ENCODE measurements at regions of chr20 and their contacts with region 1.

Region 1: GRCh38 chr20:59087829-59088433 is 45.3 kb upstream of the PRELID3B start:
- DNase-seq: peak; percentile 76 to 94 (median 87)
- ATAC-seq: peak; percentile 91
- H3K4me3 ChIP-seq: no peak overlapping the region
- H3K4me3 Mint-ChIP-seq: no peak overlapping the region
- H3K27ac ChIP-seq: no peak overlapping the region
- H3K27ac Mint-ChIP-seq: peak overlapping the region; percentile 44
- H3K4me1 ChIP-seq: peaks cover 3% of the 10 kb centered on the region
- H3K4me1 Mint-ChIP-seq: peaks cover 7% of the 10 kb centered on the region
- H3K27me3 ChIP-seq: no peaks in the 10 kb centered on the region
- H3K27me3 Mint-ChIP-seq: no peaks in the 10 kb centered on the region
- CTCF ChIP-seq: peak; percentile 95

Region 2: DNA sequence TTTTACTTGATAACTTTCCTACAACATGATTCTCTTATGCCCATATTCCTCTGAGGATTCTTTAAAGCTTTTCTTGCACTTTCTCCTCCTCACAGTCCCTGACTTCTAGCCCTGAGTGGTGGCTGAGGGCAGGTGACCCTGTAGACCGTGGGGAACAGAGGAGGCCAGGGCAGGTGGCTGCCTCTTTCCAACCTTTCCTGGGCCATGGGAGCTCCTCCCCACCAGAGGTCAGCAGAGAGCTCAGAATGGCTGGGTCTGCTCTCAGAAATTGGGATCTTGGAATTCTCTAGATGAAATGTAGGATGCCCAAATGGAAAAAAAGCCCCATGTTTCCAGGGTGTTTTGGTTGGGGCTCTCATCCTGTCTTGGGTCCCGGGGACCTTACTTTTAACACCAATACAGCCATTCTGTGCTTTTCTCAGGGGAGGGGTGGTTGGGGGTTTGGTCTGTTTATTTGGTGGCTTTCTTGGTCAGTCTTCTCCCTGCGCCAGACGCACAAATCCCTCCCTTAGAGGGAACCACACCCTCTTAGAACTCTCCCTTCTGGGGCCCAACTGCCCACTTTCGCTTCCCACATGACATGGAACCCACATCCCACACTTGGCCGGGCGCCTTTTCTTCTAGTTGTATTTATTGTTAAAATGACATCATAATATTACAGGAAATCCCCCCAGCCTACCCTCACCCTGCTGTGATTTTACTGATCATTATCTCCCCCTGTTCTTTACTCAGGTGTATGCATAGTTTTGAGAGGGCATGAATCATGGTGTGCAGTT is 217.5 kb before region 1 on chr20:
- CTCF ChIA-PET with region 1: no interaction called
- POLR2A ChIA-PET with region 1: no interaction called
- intact Hi-C with region 1: loop called in 1 of 2 experiments (anchors 2 kb)
- DNase-seq: peak in 12 of 14 experiments; percentile 38 to 75 (median 50)
- ATAC-seq: peak; percentile 67
- H3K4me3 ChIP-seq: no peak overlapping the region
- H3K4me3 Mint-ChIP-seq: no peak overlapping the region
- H3K27ac ChIP-seq: no peak overlapping the region
- H3K27ac Mint-ChIP-seq: no peak overlapping the region
- H3K4me1 ChIP-seq: peaks cover 3% of the 10 kb centered on the region
- H3K4me1 Mint-ChIP-seq: peaks cover 5% of the 10 kb centered on the region
- H3K27me3 ChIP-seq: no peaks in the 10 kb centered on the region
- H3K27me3 Mint-ChIP-seq: no peaks in the 10 kb centered on the region
- CTCF ChIP-seq: peak; percentile 86

Region 3: DNA sequence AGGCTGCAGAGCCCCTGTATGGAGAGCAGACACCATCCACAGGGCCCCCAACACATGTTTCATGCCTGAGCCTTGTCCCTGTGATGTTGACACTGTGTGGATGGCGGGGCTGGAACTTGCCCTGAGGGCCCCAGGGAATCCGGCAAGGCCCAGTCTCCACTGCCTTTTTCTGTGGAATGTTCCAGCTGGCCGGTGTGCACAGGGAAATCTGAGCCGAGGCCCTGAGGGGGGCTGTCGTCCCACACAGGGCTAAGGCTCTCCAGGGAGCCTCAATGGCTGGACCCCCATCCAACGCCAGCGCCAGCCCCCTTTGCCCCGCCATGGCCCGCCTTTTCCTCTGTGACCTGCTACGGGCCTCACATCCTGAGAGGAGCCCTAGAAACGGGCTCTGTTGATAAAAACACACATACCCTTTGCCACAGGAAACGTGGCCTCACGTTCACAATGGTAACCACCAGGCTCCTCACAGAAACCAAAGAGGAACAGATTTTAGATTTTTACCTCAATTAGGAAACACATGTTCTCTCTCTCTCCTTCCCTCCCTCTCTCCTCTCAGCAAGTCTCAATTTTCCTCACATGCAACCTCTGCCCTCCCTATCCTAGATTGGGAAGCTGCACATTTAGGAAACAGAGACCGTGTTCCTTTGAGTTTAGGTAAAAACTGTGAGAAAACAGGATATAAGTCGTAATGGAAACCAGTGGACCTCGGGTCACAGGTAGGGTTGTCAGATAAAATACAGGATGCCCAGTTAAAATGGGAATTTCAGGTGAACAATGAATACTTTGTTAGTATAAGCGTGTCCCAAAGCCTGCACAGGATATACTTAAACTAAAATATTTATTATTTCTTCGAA is 61.9 kb after region 1 on chr20:
- CTCF ChIA-PET with region 1: interaction called, 8 read pairs
- POLR2A ChIA-PET with region 1: interaction called, 10 read pairs
- intact Hi-C with region 1: no loop called
- DNase-seq: peak; percentile 52 to 94 (median 72)
- ATAC-seq: peak; percentile 79
- H3K4me3 ChIP-seq: peak overlapping the region; percentile 21
- H3K4me3 Mint-ChIP-seq: peak overlapping the region; percentile 82
- H3K27ac ChIP-seq: peak overlapping the region; percentile 95 to 96
- H3K27ac Mint-ChIP-seq: peak overlapping the region; percentile 97
- H3K4me1 ChIP-seq: peaks cover 99% of the 10 kb centered on the region
- H3K4me1 Mint-ChIP-seq: peaks cover 95% of the 10 kb centered on the region
- H3K27me3 ChIP-seq: no peaks in the 10 kb centered on the region
- H3K27me3 Mint-ChIP-seq: no peaks in the 10 kb centered on the region
- CTCF ChIP-seq: no peak

Region 4: DNA sequence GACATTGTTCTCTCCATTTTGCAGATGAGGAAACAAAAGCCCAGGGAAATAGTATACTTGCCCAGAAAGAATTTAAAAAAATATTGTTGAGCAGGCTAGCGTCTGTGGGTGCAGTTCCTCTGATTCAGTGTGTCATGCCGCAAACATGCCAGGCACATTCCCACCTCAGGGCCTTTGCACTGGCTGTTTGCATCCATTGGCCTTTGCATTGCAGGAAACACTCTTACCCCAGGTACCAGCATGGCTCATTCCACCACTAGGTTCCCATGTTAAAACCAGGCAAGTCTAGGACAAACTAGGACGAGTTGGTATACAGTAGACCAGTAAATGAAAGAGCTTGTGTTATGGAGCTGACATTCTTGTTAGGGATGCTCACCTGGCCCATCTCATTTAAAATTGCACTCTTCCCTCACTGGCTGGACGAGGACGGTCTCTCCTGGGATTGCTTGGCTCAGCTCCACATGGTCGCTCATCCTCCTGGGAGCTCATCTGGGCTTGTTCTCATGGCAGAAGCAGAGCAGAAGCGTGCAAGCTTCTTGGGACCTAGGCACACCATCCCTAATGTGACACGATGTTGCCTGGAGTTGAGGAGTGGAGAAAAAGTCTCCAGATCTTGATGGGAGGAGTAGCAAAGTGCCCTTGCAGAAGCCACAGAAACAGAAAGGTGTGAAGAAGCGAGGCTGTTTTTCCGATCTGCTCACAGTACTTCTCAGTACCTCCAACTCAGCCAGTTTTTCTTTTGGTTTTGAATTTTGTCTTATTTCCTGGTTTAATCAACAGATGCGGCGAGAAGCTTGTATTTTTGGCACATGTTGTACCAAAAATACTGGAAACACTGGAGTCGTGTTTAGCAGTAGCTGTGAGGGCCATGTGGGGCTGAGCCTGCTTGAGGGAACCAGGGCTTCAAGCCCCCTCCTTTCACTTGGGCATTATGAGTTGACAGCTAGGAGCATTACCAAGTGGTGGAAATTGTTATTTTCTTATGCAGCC is 89.6 kb after region 1 on chr20:
- CTCF ChIA-PET with region 1: interaction called, 11 read pairs
- POLR2A ChIA-PET with region 1: interaction called, 4 read pairs
- intact Hi-C with region 1: no loop called
- DNase-seq: peak in 4 of 14 experiments; percentile 43 to 82 (median 60)
- ATAC-seq: peak; percentile 68
- H3K4me3 ChIP-seq: peak overlapping the region; percentile 9
- H3K4me3 Mint-ChIP-seq: peak overlapping the region; percentile 35
- H3K27ac ChIP-seq: peak overlapping the region; percentile 33 to 70
- H3K27ac Mint-ChIP-seq: peak overlapping the region; percentile 82
- H3K4me1 ChIP-seq: peaks cover 73% of the 10 kb centered on the region
- H3K4me1 Mint-ChIP-seq: peaks cover 92% of the 10 kb centered on the region
- H3K27me3 ChIP-seq: no peaks in the 10 kb centered on the region
- H3K27me3 Mint-ChIP-seq: no peaks in the 10 kb centered on the region
- CTCF ChIP-seq: no peak

Region 5: GRCh38 chr20:59222253-59223181 is 134.6 kb after region 1 on chr20:
- CTCF ChIA-PET with region 1: interaction called, 32 read pairs
- POLR2A ChIA-PET with region 1: interaction called, 6 read pairs
- intact Hi-C with region 1: loop called (anchors 1 kb)
- DNase-seq: peak; percentile 72 to 87 (median 78)
- ATAC-seq: peak; percentile 94
- H3K4me3 ChIP-seq: peak overlapping the region; percentile 46
- H3K4me3 Mint-ChIP-seq: peak overlapping the region; percentile 86
- H3K27ac ChIP-seq: no peak overlapping the region
- H3K27ac Mint-ChIP-seq: peak overlapping the region; percentile 87
- H3K4me1 ChIP-seq: peaks cover 16% of the 10 kb centered on the region
- H3K4me1 Mint-ChIP-seq: peaks cover 51% of the 10 kb centered on the region
- H3K27me3 ChIP-seq: no peaks in the 10 kb centered on the region
- H3K27me3 Mint-ChIP-seq: no peaks in the 10 kb centered on the region
- CTCF ChIP-seq: peak; percentile 93

Region 6: GRCh38 chr20:59495894-59496510 is 408.1 kb after region 1 on chr20:
- CTCF ChIA-PET with region 1: no interaction called
- POLR2A ChIA-PET with region 1: no interaction called
- intact Hi-C with region 1: loop called in 1 of 2 experiments (anchors 10 kb)
- DNase-seq: peak; percentile 47 to 77 (median 60)
- ATAC-seq: peak; percentile 59
- H3K4me3 ChIP-seq: no peak overlapping the region
- H3K4me3 Mint-ChIP-seq: no peak overlapping the region
- H3K27ac ChIP-seq: no peak overlapping the region
- H3K27ac Mint-ChIP-seq: no peak overlapping the region
- H3K4me1 ChIP-seq: peaks cover 5% of the 10 kb centered on the region
- H3K4me1 Mint-ChIP-seq: no peaks in the 10 kb centered on the region
- H3K27me3 ChIP-seq: peaks cover 4 to 16% of the 10 kb centered on the region in 2 experiments
- H3K27me3 Mint-ChIP-seq: peaks cover 43% of the 10 kb centered on the region
- CTCF ChIP-seq: peak; percentile 89

Measured in CD4-positive, alpha-beta T cell (primary cell).